PC-9 (cell line): ENCODE measurements at regions of chr2 and their contacts with region 1.

Region 1: DNA sequence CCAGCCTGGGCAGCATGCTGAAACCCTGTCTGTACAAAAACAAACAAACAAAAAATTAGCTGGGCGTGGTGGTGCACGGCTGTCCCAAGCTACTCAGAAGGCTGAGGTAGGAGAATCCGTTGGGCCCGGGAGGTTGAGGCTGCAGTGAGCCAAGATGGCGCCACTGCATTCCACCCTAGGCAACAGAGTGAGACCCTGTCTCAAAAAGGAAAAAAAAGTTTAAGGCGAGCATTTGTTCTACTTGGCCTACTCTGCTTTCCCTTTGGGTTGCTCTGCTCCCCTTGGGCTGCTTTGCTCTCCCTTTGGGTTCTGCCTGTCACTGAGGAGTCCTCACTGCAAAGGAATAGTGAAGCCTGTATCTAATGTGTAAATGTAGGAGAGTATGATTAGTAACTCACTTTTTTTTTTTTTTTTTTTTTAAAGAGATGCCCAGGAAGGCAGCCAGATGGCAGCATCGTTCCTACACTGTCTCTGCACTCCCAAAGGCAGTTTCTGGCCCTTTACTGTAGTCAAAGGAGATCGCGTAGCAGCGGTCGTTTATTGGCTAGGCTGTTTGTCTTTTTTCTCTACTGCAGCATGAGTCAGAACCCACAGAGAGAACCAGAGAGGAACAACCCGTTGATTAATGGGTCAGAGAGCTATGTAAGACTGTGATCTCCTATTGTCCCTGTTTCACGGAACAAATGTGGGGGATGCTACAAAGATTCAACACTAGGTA is 118.3 kb upstream of the CWC22 start:
- DNase-seq: peak; percentile 76 to 84
- H3K4me3 ChIP-seq: no peak overlapping the region
- H3K27ac ChIP-seq: no peak overlapping the region
- H3K4me1 ChIP-seq: peaks cover 11% of the 10 kb centered on the region; the same call in 1 of the 2 replicates
- H3K27me3 ChIP-seq: no peaks in the 10 kb centered on the region
- CTCF ChIP-seq: peak; percentile 87

Region 2: GRCh38 chr2:180240774-180241173 is 115.4 kb after region 1 on chr2:
- CTCF ChIA-PET with region 1: no interaction called
- POLR2A ChIA-PET with region 1: no interaction called
- intact Hi-C with region 1: loop called (anchors 5 kb)
- DNase-seq: peak in 1 of 2 experiments; percentile 52
- H3K4me3 ChIP-seq: no peak overlapping the region
- H3K27ac ChIP-seq: no peak overlapping the region
- H3K4me1 ChIP-seq: no peaks in the 10 kb centered on the region
- H3K27me3 ChIP-seq: no peaks in the 10 kb centered on the region
- CTCF ChIP-seq: peak; percentile 59

Region 3: DNA sequence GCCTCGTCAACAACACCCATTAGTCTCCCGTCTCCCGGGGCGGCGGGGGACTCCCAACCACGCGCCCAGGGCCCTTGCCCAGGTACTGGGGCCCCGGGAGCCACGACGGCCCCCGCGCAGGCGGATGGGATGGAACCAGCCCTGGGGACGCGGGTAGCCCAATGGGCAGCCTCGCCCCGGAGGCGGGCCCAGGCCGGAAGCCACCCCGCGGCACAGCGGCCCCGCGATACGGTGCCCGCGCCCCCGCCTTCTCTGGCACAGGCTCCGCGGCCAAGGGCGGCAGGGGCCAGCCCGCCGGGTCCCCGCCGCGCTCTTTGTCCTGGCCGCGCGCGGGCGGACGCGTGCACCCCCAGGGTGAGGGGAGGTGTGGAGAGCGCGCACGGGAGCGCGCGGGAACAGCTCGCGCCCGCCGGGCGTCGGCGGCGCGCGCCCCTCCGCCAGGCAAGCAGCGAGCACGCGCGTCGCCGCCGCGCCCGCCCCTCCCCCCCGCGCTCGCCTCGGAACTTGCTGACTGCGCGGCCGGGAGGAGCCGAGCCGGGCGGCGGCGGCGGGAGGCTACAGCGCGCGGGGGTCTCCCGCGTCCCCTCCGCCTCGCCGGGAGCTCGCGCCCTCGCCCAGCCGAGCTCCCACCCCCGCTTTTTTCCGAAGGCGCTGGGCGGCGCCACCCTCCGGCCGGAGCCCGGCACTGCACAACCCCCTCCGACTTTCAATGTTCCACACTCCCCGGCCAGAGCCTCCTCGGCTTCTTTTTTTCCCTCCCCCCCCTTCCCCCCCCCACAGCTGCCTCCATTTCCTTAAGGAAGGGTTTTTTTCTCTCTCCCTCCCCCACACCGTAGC is 854.9 kb after region 1 on chr2 and contains the start of gene UBE2E3:
- CTCF ChIA-PET with region 1: interaction called, 10 read pairs
- POLR2A ChIA-PET with region 1: interaction called, 10 read pairs
- intact Hi-C with region 1: loop called (anchors 1 kb)
- DNase-seq: peak; percentile 70 to 94
- H3K4me3 ChIP-seq: peak within 1 kb of the TSS; percentile 76
- H3K27ac ChIP-seq: peak within 1 kb of the TSS; percentile 86
- H3K4me1 ChIP-seq: peaks cover 46% of the 10 kb centered on the region
- H3K27me3 ChIP-seq: no peaks in the 10 kb centered on the region
- CTCF ChIP-seq: peak; percentile 84
- total RNA-seq, gene UBE2E3: 139 and 180 TPM in 2 replicates

Region 4: GRCh38 chr2:181104512-181105115 is 979.2 kb after region 1 on chr2:
- CTCF ChIA-PET with region 1: interaction called, 15 read pairs
- POLR2A ChIA-PET with region 1: no interaction called
- intact Hi-C with region 1: loop called (anchors 10 kb)
- DNase-seq: peak in 1 of 2 experiments; percentile 28
- H3K4me3 ChIP-seq: no peak overlapping the region
- H3K27ac ChIP-seq: no peak overlapping the region
- H3K4me1 ChIP-seq: peaks cover 27% of the 10 kb centered on the region
- H3K27me3 ChIP-seq: no peaks in the 10 kb centered on the region
- CTCF ChIP-seq: peak; percentile 90

Region 5: GRCh38 chr2:181573140-181573736 is 1447.8 kb after region 1 on chr2:
- CTCF ChIA-PET with region 1: no interaction called
- POLR2A ChIA-PET with region 1: no interaction called
- intact Hi-C with region 1: loop called (anchors 5 kb)
- DNase-seq: peak; percentile 19 to 49
- H3K4me3 ChIP-seq: no peak overlapping the region
- H3K27ac ChIP-seq: no peak overlapping the region
- H3K4me1 ChIP-seq: no peaks in the 10 kb centered on the region
- H3K27me3 ChIP-seq: no peaks in the 10 kb centered on the region
- CTCF ChIP-seq: peak; percentile 86

Region 6: GRCh38 chr2:181891966-181892798 is 1766.8 kb after region 1 on chr2:
- CTCF ChIA-PET with region 1: no interaction called
- POLR2A ChIA-PET with region 1: no interaction called
- intact Hi-C with region 1: loop called (anchors 10 kb)
- DNase-seq: peak; percentile 78 to 88
- H3K4me3 ChIP-seq: peak overlapping the region; percentile 88
- H3K27ac ChIP-seq: peak overlapping the region; percentile 82
- H3K4me1 ChIP-seq: peaks cover 49% of the 10 kb centered on the region
- H3K27me3 ChIP-seq: no peaks in the 10 kb centered on the region
- CTCF ChIP-seq: peak; percentile 41; the same call in 1 of the 2 replicates